Heart right ventricle (tissue), 16 donors: ENCODE measurements at regions of chr6 and their contacts with region 1.

Region 1: GRCh38 chr6:5121479-5121878 is 36.3 kb downstream of the PPP1R3G start:
- DNase-seq: peak; percentile 54 to 69
- ATAC-seq: peak; percentile 28 to 98 (median 92)
- H3K4me3 ChIP-seq: no peak overlapping the region
- H3K27ac ChIP-seq: peak overlapping the region in 5 of 10 donors; percentile 22 to 59 (median 48)
- H3K4me1 ChIP-seq: peaks cover 0 to 19% (median 7%) of the 10 kb centered on the region in 9 donors
- H3K27me3 ChIP-seq: no peaks in the 10 kb centered on the region
- CTCF ChIP-seq: no peak

Region 2: GRCh38 chr6:5078121-5078669 is 43.3 kb before region 1 on chr6:
- intact Hi-C with region 1: loop called in 2 of 10 experiments (anchors 5 kb)
- DNase-seq: no peak
- ATAC-seq: peak in 3 of 8 donors; percentile 65 to 71 (median 65)
- H3K4me3 ChIP-seq: no peak overlapping the region
- H3K27ac ChIP-seq: no peak overlapping the region
- H3K4me1 ChIP-seq: peaks cover 0 to 4% (median 0%) of the 10 kb centered on the region in 9 donors
- H3K27me3 ChIP-seq: no peaks in the 10 kb centered on the region
- CTCF ChIP-seq: peak in 7 of 9 donors; percentile 18 to 53 (median 33)

Region 3: GRCh38 chr6:5174244-5174643 is 52.8 kb after region 1 on chr6:
- intact Hi-C with region 1: no loop called
- DNase-seq: peak in 1 of 2 donors; percentile 16
- ATAC-seq: peak in 6 of 8 donors; percentile 46 to 80 (median 65)
- H3K4me3 ChIP-seq: peak overlapping the region in 4 of 10 donors; percentile 2 to 21 (median 16)
- H3K27ac ChIP-seq: peak overlapping the region in 6 of 10 donors; percentile 4 to 59 (median 42)
- H3K4me1 ChIP-seq: peaks cover 0 to 15% (median 5%) of the 10 kb centered on the region in 9 donors
- H3K27me3 ChIP-seq: no peaks in the 10 kb centered on the region
- CTCF ChIP-seq: no peak